Transverse colon (tissue), 4 donors: ENCODE measurements at regions of chr11 and their contacts with region 1.

Region 1: GRCh38 chr11:95764267-95764898 is 25.2 kb downstream of the FAM76B start:
- DNase-seq: no peak
- H3K4me3 ChIP-seq: no peak overlapping the region
- H3K27ac ChIP-seq: no peak overlapping the region
- H3K4me1 ChIP-seq: no peaks in the 10 kb centered on the region
- H3K27me3 ChIP-seq: no peaks in the 10 kb centered on the region
- CTCF ChIP-seq: peak; percentile 62 to 80 (median 67)
- EP300 ChIP-seq: no peak
- POLR2A ChIP-seq: no peak

Region 2: DNA sequence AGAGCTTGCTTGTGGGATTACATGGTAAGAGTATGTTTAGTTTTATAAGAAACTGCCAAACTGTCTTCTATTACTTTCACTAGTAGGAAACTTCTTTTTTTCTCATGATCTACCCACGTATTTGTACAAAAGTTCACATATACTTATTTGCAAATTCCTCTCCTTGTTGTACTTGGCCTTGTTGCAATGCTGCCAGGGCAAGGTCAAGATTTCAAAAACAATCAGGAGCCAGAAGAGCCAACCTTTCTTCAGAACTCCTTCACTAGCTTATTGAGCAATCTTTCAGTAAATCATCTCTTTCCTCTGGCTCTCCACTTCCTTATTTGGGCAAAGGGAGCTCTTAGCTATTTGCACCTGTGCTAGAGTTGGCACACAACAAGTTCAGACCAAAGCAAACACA is 688.0 kb before region 1 on chr11:
- in situ Hi-C with region 1: loop called in 2 of 4 experiments (anchors 10 kb)
- intact Hi-C with region 1: loop called (anchors 10 kb)
- DNase-seq: no peak
- H3K4me3 ChIP-seq: no peak overlapping the region
- H3K27ac ChIP-seq: no peak overlapping the region
- H3K4me1 ChIP-seq: peaks cover 5 to 23% (median 12%) of the 10 kb centered on the region in 4 donors
- H3K27me3 ChIP-seq: no peaks in the 10 kb centered on the region
- CTCF ChIP-seq: no peak
- EP300 ChIP-seq: no peak
- POLR2A ChIP-seq: no peak

Region 3: GRCh38 chr11:95150946-95151684 is 613.3 kb before region 1 on chr11:
- in situ Hi-C with region 1: loop called in 2 of 4 experiments (anchors 10 kb)
- intact Hi-C with region 1: loop called (anchors 5 kb)
- DNase-seq: peak; percentile 95
- H3K4me3 ChIP-seq: peak overlapping the region; percentile 25 to 54 (median 42)
- H3K27ac ChIP-seq: peak overlapping the region; percentile 86 to 93 (median 90)
- H3K4me1 ChIP-seq: peaks cover 0 to 25% (median 14%) of the 10 kb centered on the region in 4 donors
- H3K27me3 ChIP-seq: no peaks in the 10 kb centered on the region
- CTCF ChIP-seq: peak; percentile 65 to 96 (median 79)
- EP300 ChIP-seq: no peak
- POLR2A ChIP-seq: peak; percentile 74

Region 4: DNA sequence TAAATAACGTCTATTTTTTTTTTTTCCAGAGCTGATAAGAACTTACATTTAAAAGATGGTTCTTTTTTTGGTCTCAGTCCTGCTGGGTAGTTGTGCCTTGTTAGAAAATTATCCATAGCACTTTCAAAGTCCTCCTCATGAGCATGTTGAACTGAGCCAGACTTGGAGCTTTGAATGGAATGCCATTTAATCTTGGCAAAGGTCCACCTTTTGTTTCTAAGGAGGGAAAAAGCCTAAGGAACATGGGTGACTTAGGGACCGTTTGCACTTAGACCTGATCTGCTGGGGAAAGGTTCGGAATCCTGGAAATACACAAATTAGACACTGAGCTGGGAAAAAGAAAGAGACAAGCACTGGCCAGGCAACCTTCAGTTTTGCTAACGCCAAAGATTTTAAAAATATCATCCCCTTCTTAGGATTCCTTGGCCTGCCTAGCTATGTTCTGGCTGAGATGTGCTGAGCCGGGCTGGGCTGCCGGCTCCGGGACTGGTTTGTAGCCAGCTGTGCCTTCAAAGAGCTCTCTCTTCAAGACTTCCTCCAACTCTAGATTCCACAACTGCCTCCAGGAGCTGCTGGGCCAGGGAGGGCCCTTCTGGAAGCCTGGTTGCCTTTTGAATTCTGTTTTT is 607.4 kb before region 1 on chr11:
- in situ Hi-C with region 1: loop called in 3 of 4 experiments (anchors 5 to 10 kb)
- intact Hi-C with region 1: loop called (anchors 5 kb)
- DNase-seq: no peak
- H3K4me3 ChIP-seq: no peak overlapping the region
- H3K27ac ChIP-seq: peak overlapping the region; percentile 18 to 62 (median 52)
- H3K4me1 ChIP-seq: peaks cover 0 to 23% (median 8%) of the 10 kb centered on the region in 4 donors
- H3K27me3 ChIP-seq: no peaks in the 10 kb centered on the region
- CTCF ChIP-seq: no peak
- EP300 ChIP-seq: no peak
- POLR2A ChIP-seq: no peak

Region 5: DNA sequence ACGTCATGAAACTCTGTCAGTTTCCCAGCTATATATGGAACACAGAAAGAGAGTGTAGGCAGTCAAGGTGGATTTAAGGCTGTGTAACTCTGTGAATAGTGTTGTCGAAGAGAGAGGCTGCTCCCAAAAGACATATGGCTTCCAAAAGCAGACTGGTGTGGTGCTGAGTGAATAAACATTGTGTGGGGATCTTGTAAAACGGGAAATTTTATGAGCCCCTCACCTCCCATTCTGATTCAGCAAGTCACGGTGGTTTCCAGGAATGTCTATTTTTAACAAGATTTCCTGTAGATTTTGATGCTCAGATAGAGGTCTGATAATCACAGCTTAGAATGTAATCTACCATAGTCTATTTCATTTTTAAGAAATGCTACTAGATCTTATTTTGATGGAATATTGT is 601.3 kb before region 1 on chr11:
- in situ Hi-C with region 1: loop called in 3 of 4 experiments (anchors 5 to 10 kb)
- intact Hi-C with region 1: loop called (anchors 5 kb)
- DNase-seq: no peak
- H3K4me3 ChIP-seq: no peak overlapping the region
- H3K27ac ChIP-seq: no peak overlapping the region
- H3K4me1 ChIP-seq: no peaks in the 10 kb centered on the region
- H3K27me3 ChIP-seq: no peaks in the 10 kb centered on the region
- CTCF ChIP-seq: no peak
- EP300 ChIP-seq: no peak
- POLR2A ChIP-seq: no peak

Region 6: GRCh38 chr11:95877291-95877690 is 112.9 kb after region 1 on chr11:
- in situ Hi-C with region 1: no loop called
- intact Hi-C with region 1: no loop called
- DNase-seq: no peak
- H3K4me3 ChIP-seq: no peak overlapping the region
- H3K27ac ChIP-seq: no peak overlapping the region
- H3K4me1 ChIP-seq: no peaks in the 10 kb centered on the region
- H3K27me3 ChIP-seq: no peaks in the 10 kb centered on the region
- CTCF ChIP-seq: no peak
- EP300 ChIP-seq: no peak
- POLR2A ChIP-seq: no peak